ENCODE measurements at regions of chr1 and their contacts with region 1.

Region 1: DNA sequence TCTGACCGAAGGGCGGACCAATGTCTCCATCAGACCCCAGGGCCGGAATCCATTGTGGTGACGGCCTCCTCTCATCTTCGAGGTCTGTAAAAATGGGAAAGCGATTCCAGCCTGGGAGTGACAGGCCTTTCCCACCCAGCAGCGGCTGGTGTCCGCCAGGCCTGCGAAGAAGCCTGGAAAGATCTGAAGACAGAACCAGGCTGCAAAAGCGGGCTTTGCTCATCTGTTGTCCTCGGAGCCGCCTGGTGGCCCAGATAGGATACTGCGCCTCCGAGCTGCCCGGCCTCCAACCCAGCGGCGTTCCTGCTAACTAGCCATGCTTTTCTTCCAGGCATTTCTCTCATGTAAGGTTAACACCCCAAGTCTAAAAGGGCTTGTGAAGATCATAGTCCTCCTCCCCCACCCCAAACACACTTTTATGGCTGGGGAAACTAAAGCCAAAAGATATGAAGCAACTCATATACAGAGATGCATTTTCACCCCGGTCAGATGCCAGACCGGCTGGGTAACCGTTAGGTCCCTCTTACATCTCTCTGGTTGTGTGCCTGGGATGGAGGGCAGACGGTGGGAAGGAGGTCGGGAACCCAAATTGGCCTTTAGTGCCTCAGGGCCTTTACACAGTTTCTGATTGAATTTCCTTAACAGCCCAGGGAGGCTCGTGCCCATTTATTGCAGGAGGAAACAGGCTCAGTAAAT is 1.9 kb upstream of the DHRS3 start:
- DNase-seq: peak; percentile 88
- ATAC-seq: peak; percentile 31
- H3K4me3 ChIP-seq: peak overlapping the region; percentile 83
- H3K27ac ChIP-seq: peak overlapping the region; percentile 91
- H3K4me1 ChIP-seq: peaks cover 20% of the 10 kb centered on the region
- H3K27me3 ChIP-seq: no peaks in the 10 kb centered on the region
- CTCF ChIP-seq: peak; percentile 92

Region 2: DNA sequence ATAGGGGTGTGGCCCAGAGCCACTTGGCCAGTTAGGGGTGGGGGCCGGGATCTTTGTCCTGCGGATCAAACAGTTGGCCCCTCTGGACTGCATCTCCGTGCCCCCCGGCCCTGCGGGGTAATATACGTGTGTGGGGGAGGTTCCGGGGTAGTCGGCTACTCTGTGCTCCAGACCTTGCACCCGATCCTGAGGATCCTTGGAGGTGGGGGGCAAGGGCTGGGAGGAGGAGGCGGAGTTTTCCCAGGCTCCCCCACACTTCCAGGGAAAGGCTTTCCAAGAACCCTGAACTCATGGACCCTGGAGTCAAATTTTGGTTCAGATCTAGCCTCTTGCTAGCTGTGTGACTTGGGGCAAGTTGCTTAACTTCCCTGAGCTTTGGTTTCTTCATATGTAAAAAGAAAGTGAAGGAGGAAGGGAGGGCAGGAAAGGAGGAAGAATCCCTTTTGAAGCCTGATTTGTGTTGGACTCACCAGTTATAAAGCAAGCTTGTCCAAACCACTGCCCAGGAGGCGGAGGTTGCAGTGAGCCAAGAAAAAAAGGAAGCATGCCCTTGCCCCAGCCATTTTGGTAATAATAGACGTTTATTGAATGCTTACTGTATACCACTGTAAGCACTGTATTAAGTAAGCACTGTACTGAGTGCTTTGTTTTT is 600.0 kb before region 1 on chr1:
- CTCF ChIA-PET with region 1: no interaction called
- POLR2A ChIA-PET with region 1: interaction called, 35 read pairs
- intact Hi-C with region 1: no loop called
- DNase-seq: no peak
- ATAC-seq: peak; percentile 3; the same call in 1 of the 2 replicates
- H3K4me3 ChIP-seq: peak overlapping the region; percentile 85
- H3K27ac ChIP-seq: no peak overlapping the region
- H3K4me1 ChIP-seq: no peaks in the 10 kb centered on the region
- H3K27me3 ChIP-seq: no peaks in the 10 kb centered on the region
- CTCF ChIP-seq: no peak

Region 3: DNA sequence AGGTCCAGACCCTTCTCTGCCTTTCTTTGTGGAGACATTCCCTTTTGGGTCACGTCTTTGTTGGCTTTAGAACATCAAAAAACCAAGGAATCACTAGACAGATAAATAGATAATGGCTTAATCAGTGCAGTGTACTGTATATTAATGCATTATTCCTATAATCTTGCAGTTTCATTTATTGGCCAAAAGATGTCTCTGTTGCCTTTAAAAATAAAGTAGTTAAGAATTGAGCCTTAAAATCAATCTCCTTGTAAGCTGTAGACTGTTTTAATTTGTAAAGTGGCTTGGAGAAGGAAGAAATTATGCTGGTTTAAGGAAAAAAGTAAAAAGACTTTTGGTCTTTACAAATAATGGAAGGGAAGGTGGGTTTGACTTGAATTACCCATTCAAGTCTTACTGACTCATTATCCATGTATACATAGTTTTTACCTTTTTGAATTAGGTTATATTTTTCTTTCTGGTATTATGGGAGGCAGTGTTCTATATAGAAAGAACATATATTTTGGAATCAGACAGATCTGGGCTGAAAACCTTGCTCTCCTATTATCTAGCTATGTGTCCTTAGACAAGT is 305.5 kb before region 1 on chr1:
- CTCF ChIA-PET with region 1: no interaction called
- POLR2A ChIA-PET with region 1: interaction called, 7 read pairs
- intact Hi-C with region 1: loop called (anchors 1 kb)
- DNase-seq: peak; percentile 44
- ATAC-seq: peak; percentile 67
- H3K4me3 ChIP-seq: no peak overlapping the region
- H3K27ac ChIP-seq: no peak overlapping the region
- H3K4me1 ChIP-seq: no peaks in the 10 kb centered on the region
- H3K27me3 ChIP-seq: no peaks in the 10 kb centered on the region
- CTCF ChIP-seq: peak; percentile 73

Region 4: GRCh38 chr1:12380326-12381249 is 239.4 kb before region 1 on chr1:
- CTCF ChIA-PET with region 1: interaction called, 7 read pairs
- POLR2A ChIA-PET with region 1: no interaction called
- intact Hi-C with region 1: loop called (anchors 1 kb)
- DNase-seq: peak; percentile 61
- ATAC-seq: peak; percentile 27
- H3K4me3 ChIP-seq: peak overlapping the region; percentile 39
- H3K27ac ChIP-seq: peak overlapping the region; percentile 99
- H3K4me1 ChIP-seq: peaks cover 54% of the 10 kb centered on the region
- H3K27me3 ChIP-seq: no peaks in the 10 kb centered on the region
- CTCF ChIP-seq: no peak

Region 5: GRCh38 chr1:12447849-12448312 is 172.1 kb before region 1 on chr1:
- CTCF ChIA-PET with region 1: no interaction called
- POLR2A ChIA-PET with region 1: no interaction called
- intact Hi-C with region 1: no loop called
- DNase-seq: no peak
- ATAC-seq: no peak
- H3K4me3 ChIP-seq: no peak overlapping the region
- H3K27ac ChIP-seq: no peak overlapping the region
- H3K4me1 ChIP-seq: no peaks in the 10 kb centered on the region
- H3K27me3 ChIP-seq: no peaks in the 10 kb centered on the region
- CTCF ChIP-seq: no peak

Region 6: GRCh38 chr1:12464598-12465056 is 155.3 kb before region 1 on chr1:
- CTCF ChIA-PET with region 1: no interaction called
- POLR2A ChIA-PET with region 1: no interaction called
- intact Hi-C with region 1: loop called (anchors 5 kb)
- DNase-seq: peak; percentile 95
- ATAC-seq: peak; percentile 98
- H3K4me3 ChIP-seq: no peak overlapping the region
- H3K27ac ChIP-seq: peak overlapping the region; percentile 73
- H3K4me1 ChIP-seq: peaks cover 49% of the 10 kb centered on the region
- H3K27me3 ChIP-seq: no peaks in the 10 kb centered on the region
- CTCF ChIP-seq: no peak

Region 7: DNA sequence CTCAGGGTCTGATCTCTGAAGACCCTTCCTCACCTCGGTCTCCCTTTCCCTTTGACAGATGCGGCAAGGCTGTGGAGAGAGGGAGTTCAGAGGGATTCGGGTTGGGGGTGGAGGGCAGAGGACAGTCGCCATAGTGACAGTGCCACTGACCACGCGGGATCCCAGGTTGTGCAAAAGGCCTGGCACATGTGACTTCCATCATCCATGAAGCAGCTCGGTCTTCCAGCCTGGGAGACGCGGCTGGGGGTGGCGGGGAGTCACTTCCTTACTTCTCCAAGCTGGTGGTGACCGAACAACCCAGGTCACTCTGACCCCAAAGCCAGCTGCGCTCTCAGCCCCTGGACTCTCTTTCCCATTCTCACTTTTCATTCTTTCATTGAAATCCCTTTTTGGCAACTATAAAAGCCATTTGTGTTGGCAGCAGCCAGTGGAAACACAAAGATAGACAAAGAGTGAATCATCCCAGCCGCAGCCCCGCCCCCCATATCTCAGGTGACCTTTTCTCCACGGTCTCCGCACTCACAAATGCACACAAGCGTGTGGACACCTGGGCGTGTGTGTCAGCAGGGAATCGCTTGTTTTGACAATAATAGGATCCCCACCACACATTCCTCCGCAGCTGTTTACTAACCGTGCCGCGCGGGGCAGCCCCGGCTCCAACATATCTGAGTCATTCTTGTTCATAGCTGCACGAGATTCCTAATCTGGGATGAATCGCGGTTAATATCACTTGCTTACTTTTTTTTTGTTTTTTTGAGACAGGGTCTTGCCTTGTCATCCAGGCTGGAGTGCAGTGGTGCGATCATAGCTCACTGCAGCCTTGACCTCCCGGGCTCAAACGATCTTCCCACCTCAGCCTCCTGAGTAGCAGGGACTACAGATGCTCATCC is 70.2 kb before region 1 on chr1:
- CTCF ChIA-PET with region 1: no interaction called
- POLR2A ChIA-PET with region 1: interaction called, 4 read pairs
- intact Hi-C with region 1: loop called (anchors 1 kb)
- DNase-seq: peak; percentile 98
- ATAC-seq: peak; percentile 96
- H3K4me3 ChIP-seq: peak overlapping the region; percentile 25; the same call in 1 of the 2 replicates
- H3K27ac ChIP-seq: peak overlapping the region; percentile 81
- H3K4me1 ChIP-seq: peaks cover 18% of the 10 kb centered on the region
- H3K27me3 ChIP-seq: no peaks in the 10 kb centered on the region
- CTCF ChIP-seq: no peak

Region 8: GRCh38 chr1:12604114-12604874 is 15.6 kb before region 1 on chr1:
- CTCF ChIA-PET with region 1: interaction called, 3 read pairs
- POLR2A ChIA-PET with region 1: interaction called, 6 read pairs
- intact Hi-C with region 1: loop called (anchors 1 kb)
- DNase-seq: peak; percentile 97
- ATAC-seq: peak; percentile 87
- H3K4me3 ChIP-seq: peak overlapping the region; percentile 19; the same call in 1 of the 2 replicates
- H3K27ac ChIP-seq: peak overlapping the region; percentile 85
- H3K4me1 ChIP-seq: peaks cover 44% of the 10 kb centered on the region
- H3K27me3 ChIP-seq: no peaks in the 10 kb centered on the region
- CTCF ChIP-seq: no peak

Measured in PC-3 (cell line).